ENCODE measurements at regions of chr4 and their contacts with region 1.

Region 1: DNA sequence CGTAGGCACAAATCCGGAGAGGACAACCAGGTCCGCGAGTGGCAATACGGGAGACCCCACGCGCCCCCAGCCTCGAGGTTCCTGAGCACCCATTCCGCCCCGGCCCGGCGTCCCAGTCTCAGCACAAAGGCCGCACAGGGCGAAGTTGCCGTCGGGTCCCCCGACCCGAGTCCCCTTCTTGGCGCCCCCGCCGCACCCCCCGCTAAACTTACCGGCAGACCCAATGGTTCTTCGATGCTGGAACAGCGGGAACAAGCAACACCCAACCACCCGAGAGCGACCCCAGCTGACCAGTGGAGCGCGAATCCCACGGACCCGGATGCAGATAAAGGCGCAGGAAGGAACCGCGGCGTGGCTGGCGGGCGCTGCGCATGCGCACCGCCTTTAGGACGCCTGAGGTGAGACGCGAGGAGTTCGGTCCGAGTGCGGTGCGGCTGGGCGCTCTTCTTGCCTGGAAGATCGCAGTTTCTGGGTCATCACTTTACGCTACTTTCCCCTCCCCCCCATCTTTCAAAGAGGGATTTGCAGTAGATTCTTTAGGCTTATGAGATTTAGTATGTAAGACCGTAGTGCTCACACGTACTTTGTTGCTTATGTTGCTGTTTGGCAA is at the start of gene GNPDA2:
- DNase-seq: peak; percentile 71 to 96
- H3K4me3 ChIP-seq: peak within 1 kb of the TSS; percentile 81 to 88
- H3K27ac ChIP-seq: peak within 1 kb of the TSS; percentile 65 to 83
- H3K4me1 ChIP-seq: no peaks in the 10 kb centered on the region
- H3K27me3 ChIP-seq: no peaks in the 10 kb centered on the region
- CTCF ChIP-seq: peak in 2 of 3 experiments; percentile 16 to 41
- total RNA-seq, gene GNPDA2: 32.6 TPM

Region 2: DNA sequence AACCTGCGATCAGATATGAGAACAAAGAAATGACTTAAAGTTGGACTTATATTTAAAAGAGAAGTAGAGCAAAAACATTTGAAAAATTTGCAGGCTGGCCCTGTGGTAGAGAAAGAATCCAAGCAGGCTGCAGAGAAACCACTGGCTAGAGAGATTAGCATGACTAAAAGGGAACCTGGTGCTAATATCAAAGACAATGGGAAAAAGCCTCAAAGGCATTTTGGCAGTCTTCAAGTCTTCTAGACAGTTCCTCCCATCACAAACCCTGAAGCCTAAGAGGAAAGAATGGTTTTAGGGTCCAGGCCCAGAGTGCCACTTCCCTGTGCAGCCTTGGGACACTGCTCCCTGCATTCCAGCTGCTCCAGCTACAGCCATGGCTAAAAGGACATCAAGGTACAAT is 311.1 kb before region 1 on chr4:
- intact Hi-C with region 1: no loop called
- DNase-seq: no peak
- H3K4me3 ChIP-seq: no peak overlapping the region
- H3K27ac ChIP-seq: no peak overlapping the region
- H3K4me1 ChIP-seq: no peaks in the 10 kb centered on the region
- H3K27me3 ChIP-seq: no peaks in the 10 kb centered on the region
- CTCF ChIP-seq: no peak

Region 3: DNA sequence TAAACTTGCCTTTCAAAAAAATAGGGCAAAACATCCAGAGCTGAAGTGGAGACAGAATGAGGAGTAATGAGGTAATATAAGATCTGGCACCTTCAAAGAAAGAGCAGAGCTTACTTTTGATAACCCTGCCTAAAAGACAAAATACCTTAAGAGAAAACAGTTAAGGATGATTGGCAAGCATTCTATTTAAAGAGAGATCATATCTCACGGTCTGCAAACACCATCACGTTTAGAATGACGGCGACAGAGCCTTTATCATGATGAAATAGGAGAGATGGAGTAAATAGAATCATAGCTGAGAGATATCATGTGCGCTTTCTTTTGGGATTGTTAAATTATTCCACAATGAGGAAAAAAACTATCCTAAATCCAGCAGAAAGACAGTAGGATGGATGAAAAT is 158.6 kb before region 1 on chr4:
- intact Hi-C with region 1: no loop called
- DNase-seq: no peak
- H3K4me3 ChIP-seq: no peak overlapping the region
- H3K27ac ChIP-seq: no peak overlapping the region
- H3K4me1 ChIP-seq: no peaks in the 10 kb centered on the region
- H3K27me3 ChIP-seq: no peaks in the 10 kb centered on the region
- CTCF ChIP-seq: no peak

Region 4: GRCh38 chr4:44678094-44679041 is 48.0 kb before region 1 on chr4 and contains the start of gene GUF1:
- intact Hi-C with region 1: loop called (anchors 2 kb)
- DNase-seq: peak; percentile 67 to 94
- H3K4me3 ChIP-seq: peak within 1 kb of the TSS; percentile 93 to 97
- H3K27ac ChIP-seq: peak within 1 kb of the TSS; percentile 88 to 93
- H3K4me1 ChIP-seq: peaks cover 0 to 10% of the 10 kb centered on the region in 2 donors
- H3K27me3 ChIP-seq: no peaks in the 10 kb centered on the region
- CTCF ChIP-seq: peak in 1 of 3 experiments; percentile 4
- total RNA-seq, gene GUF1: 14.5 TPM

Region 5: DNA sequence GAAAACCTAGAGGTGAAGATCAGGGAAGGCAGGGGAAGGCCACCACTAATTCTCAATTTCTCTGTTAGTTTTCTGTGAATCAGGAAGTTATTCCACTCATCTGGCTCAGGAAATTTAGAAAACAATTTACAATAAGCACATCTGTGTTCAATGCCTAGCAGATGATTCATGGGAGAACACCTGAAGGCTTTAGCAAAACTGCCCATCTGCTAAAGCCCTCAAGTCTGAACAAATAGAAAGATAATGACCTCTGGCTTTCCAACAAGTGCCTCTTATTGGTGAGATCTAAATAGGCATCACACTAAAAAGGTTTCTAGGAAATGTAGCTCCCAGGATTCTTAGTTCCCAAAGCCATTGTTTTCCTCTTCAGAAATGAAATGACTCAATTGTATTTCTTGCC is 122.1 kb after region 1 on chr4:
- intact Hi-C with region 1: no loop called
- DNase-seq: no peak
- H3K4me3 ChIP-seq: no peak overlapping the region
- H3K27ac ChIP-seq: no peak overlapping the region
- H3K4me1 ChIP-seq: no peaks in the 10 kb centered on the region
- H3K27me3 ChIP-seq: no peaks in the 10 kb centered on the region
- CTCF ChIP-seq: no peak

Region 6: GRCh38 chr4:45120163-45120562 is 393.8 kb after region 1 on chr4:
- intact Hi-C with region 1: no loop called
- DNase-seq: no peak
- H3K4me3 ChIP-seq: no peak overlapping the region
- H3K27ac ChIP-seq: no peak overlapping the region
- H3K4me1 ChIP-seq: no peaks in the 10 kb centered on the region
- H3K27me3 ChIP-seq: no peaks in the 10 kb centered on the region
- CTCF ChIP-seq: no peak